ENCODE measurements at regions of chr1 and their contacts with region 1.

Region 1: DNA sequence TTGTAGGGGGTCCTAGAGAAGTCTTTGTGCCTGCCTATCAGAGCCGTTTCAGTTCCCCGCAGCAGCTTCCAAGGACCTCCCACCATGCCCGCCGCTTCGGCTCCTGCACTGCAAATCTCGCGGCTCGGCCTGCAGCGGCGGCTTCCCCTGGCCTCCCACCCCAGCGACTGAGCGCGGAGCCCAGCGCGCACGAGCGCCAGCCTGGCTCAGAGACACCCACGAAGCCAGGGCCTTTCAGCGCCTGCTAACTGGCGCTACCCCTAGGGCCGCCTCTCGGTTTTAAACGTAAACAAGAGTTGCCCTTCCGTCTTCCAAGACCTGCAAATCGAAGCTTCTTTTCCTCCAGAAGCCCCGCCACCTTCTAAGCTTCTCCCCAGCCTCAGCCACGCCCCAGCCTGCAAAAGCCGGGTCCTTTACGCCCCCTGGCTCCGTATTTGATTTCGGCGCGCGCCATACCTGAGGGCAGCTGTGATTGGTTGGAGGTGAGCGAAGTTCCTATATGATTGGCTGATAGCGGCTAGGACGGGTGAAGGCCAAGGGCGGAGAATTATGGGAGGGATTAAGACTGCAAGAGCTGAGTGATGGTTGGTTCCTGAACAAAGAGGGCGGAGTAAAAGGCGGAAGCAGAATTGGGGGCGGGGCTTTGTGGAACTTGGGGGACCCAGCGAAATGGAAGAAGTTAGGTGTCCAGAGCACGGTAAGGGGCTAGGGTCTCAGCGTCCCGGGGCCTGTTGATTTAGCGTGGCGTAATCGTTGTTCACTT is at the start of gene TTF2:
- DNase-seq: peak; percentile 90 to 94 (median 92)
- ATAC-seq: peak; percentile 99 to 100 (median 100)
- H3K4me3 ChIP-seq: peak within 1 kb of the TSS; percentile 67 to 88 (median 73)
- H3K27ac ChIP-seq: peak within 1 kb of the TSS in 11 of 12 donors; percentile 1 to 70 (median 54)
- H3K4me1 ChIP-seq: peaks cover 0 to 27% (median 7%) of the 10 kb centered on the region in 12 donors
- H3K27me3 ChIP-seq: no peaks in the 10 kb centered on the region
- CTCF ChIP-seq: peak in 9 of 12 donors; percentile 4 to 55 (median 33)
- POLR2A ChIP-seq: peak in 1 of 2 donors; percentile 13
- total RNA-seq, gene TTF2: 2.8 to 20.7 (median 9.5) TPM

Region 2: DNA sequence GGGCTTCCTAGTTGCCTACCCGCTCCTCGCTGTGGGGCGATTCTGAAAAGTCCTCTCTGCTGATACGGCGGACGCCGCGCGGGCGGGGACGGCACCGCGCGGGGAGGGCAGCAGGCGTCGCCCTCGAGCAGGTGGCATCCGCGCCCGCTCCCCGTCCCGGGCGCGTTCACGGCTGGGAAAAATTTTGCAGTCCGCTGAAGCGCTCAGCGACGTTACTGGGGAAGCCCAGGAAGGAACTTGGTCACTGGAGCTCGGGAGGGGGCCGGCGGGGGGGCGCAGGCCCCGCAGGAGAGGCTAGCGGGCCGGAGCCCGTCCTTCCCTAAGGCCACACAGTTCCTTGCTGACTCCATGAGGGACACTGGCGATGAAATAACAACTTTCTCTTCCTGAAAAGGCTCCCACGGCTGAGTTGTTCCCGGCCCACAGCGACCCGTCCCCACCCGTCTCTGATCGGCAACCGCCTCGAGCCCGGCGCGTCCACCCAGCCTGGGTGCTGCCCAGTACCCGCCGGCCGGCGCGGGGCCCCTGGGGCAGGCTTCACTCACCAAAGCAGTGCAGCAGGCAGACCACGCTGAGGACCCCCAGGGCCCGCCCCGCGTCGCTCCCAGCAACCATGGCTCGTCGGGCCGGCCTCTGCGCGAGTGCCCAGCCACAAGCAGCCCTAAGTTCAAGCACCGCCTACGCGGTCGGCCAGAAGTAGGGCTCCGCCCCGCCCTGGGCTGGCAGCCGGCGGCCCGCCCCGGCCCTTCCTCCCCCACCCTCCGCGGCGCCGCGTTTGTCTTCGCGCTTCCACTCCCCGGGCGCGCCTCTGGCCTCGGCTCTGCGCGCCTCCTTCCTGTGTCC is 489.3 kb before region 1 on chr1 and contains the start of gene CD58:
- intact Hi-C with region 1: loop called in 7 of 10 experiments (anchors 5 to 10 kb)
- DNase-seq: peak; percentile 93 to 96 (median 95)
- ATAC-seq: peak; percentile 83 to 95 (median 92)
- H3K4me3 ChIP-seq: peak within 1 kb of the TSS; percentile 79 to 99 (median 92)
- H3K27ac ChIP-seq: peak within 1 kb of the TSS; percentile 98 to 100 (median 99)
- H3K4me1 ChIP-seq: peaks cover 3 to 86% (median 49%) of the 10 kb centered on the region in 12 donors
- H3K27me3 ChIP-seq: no peaks in the 10 kb centered on the region
- CTCF ChIP-seq: peak; percentile 58 to 85 (median 72)
- POLR2A ChIP-seq: peak in 1 of 2 donors; percentile 83
- total RNA-seq, gene CD58: 19.6 to 37.5 (median 27.1) TPM

Region 3: DNA sequence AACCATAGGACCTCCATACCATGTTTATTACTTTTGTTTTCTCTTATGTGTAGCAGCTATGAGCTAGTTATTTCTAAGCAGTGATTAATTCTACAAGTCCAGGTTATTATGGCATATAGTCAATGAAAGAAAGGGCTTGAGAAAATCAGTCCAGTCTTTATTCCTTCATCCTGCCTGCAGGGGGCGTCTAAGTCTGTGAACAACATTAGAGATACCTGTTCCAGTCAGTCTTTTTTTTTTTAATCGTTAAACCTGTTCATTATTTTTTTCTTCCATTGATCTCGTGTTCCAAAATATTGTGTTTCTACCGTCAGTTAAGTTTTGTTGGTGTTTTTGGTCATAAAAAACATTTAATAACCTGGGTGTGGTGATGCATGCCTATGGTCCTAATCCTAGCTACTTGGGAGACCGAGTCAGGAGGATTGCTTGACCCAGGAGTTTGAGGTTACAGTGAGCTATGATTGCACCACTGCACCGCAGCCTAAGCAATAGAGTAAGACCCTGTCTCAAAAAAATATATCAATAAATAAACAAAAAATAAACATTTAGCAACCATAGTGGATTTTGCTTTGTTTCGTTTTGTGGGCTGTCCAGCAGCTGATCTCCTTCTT is 335.0 kb before region 1 on chr1:
- intact Hi-C with region 1: loop called in 2 of 10 experiments (anchors 2 to 5 kb)
- DNase-seq: peak in 4 of 5 donors; percentile 44 to 51 (median 47)
- ATAC-seq: peak in 1 of 4 donors; percentile 67
- H3K4me3 ChIP-seq: no peak overlapping the region
- H3K27ac ChIP-seq: no peak overlapping the region
- H3K4me1 ChIP-seq: peaks cover 0 to 6% (median 0%) of the 10 kb centered on the region in 12 donors
- H3K27me3 ChIP-seq: no peaks in the 10 kb centered on the region
- CTCF ChIP-seq: peak; percentile 54 to 87 (median 76)
- POLR2A ChIP-seq: no peak

Region 4: GRCh38 chr1:116853670-116854402 is 206.0 kb before region 1 on chr1:
- intact Hi-C with region 1: loop called in 8 of 10 experiments (anchors 2 to 10 kb)
- DNase-seq: no peak
- ATAC-seq: peak in 1 of 4 donors; percentile 76
- H3K4me3 ChIP-seq: no peak overlapping the region
- H3K27ac ChIP-seq: peak overlapping the region in 1 of 12 donors; percentile 4
- H3K4me1 ChIP-seq: peaks cover 0 to 29% (median 7%) of the 10 kb centered on the region in 12 donors
- H3K27me3 ChIP-seq: no peaks in the 10 kb centered on the region
- CTCF ChIP-seq: no peak
- POLR2A ChIP-seq: no peak

Region 5: DNA sequence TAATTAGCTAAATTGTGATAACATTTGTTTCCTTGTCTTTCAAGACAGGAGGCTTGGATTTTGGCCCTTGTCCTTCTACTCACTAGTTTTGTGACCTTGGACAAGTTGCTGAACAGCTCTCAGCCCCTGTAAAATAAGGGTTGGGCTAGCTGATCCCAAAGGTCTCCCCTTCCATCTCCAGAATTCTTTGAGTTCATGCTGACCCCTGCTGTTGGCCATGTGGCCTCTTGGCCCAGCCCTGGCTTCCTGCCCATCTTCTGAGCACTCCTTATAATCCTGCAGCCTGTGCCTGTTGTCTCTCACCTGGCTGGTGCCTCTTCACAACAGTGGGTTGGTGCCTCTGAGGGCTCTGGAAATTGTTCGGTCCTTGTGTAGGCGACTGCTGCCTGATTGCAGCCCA is 140.1 kb before region 1 on chr1:
- intact Hi-C with region 1: loop called in 2 of 10 experiments (anchors 10 kb)
- DNase-seq: peak in 2 of 5 donors; percentile 32 to 48
- ATAC-seq: peak in 1 of 4 donors; percentile 5
- H3K4me3 ChIP-seq: no peak overlapping the region
- H3K27ac ChIP-seq: peak overlapping the region in 6 of 12 donors; percentile 2 to 96 (median 33)
- H3K4me1 ChIP-seq: peaks cover 0 to 79% (median 45%) of the 10 kb centered on the region in 12 donors
- H3K27me3 ChIP-seq: no peaks in the 10 kb centered on the region
- CTCF ChIP-seq: peak in 3 of 12 donors; percentile 10 to 30 (median 19)
- POLR2A ChIP-seq: no peak

Region 6: DNA sequence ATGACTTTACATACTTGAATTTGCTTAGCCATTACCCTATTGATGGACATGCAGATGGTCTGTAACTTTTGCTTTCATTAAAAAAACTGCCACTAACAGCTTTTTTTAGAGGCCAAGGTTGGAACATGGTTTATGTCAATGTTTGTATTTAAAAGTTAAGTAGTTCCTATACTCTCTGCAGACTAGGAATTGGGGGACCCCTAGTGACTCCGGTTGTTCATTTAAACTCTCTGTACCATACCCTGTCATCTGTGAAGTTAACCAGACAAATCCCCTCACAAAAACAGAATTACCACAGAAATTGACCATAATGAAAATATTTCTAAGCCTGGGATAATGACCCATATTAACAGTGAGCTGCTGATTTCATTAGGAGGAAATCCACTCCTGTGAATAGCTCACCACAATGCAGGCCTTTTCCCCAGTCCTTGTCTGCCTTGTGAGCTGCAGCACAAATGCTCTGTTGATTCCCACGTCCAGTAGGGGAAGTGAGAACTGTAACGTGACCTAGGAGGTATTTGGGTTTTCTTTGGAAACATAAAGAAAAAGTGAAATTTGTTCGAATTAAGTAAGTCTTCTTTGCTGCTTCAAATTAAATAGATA is 88.5 kb before region 1 on chr1:
- intact Hi-C with region 1: no loop called
- DNase-seq: no peak
- ATAC-seq: peak in 3 of 4 donors; percentile 51 to 68 (median 67)
- H3K4me3 ChIP-seq: no peak overlapping the region
- H3K27ac ChIP-seq: peak overlapping the region in 7 of 12 donors; percentile 8 to 65 (median 41)
- H3K4me1 ChIP-seq: peaks cover 0 to 25% (median 15%) of the 10 kb centered on the region in 12 donors
- H3K27me3 ChIP-seq: no peaks in the 10 kb centered on the region
- CTCF ChIP-seq: no peak
- POLR2A ChIP-seq: no peak

Region 7: DNA sequence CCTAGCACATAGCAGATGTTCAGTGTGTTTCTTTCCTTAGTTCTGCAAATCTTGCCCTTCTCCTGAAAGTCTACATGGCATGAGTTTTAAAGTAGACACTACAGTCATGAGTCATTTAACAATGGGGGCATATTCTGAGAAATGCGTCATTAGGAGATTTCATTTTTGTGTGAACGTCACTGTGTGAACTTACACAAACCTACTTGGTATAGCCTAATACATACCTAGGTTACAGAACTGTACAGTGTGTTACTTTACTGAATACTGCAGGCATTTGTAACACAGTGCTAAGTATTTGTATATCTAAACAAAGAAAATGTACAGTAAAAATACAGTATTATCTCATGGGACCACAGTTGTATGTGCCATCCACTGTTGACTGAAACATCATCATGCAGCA is 10.3 kb after region 1 on chr1:
- intact Hi-C with region 1: no loop called
- DNase-seq: no peak
- ATAC-seq: no peak
- H3K4me3 ChIP-seq: no peak overlapping the region
- H3K27ac ChIP-seq: no peak overlapping the region
- H3K4me1 ChIP-seq: no peaks in the 10 kb centered on the region
- H3K27me3 ChIP-seq: no peaks in the 10 kb centered on the region
- CTCF ChIP-seq: no peak
- POLR2A ChIP-seq: no peak

Region 8: GRCh38 chr1:117113199-117113598 is 53.3 kb after region 1 on chr1:
- intact Hi-C with region 1: no loop called
- DNase-seq: no peak
- ATAC-seq: no peak
- H3K4me3 ChIP-seq: no peak overlapping the region
- H3K27ac ChIP-seq: no peak overlapping the region
- H3K4me1 ChIP-seq: peaks cover 0 to 12% (median 0%) of the 10 kb centered on the region in 12 donors
- H3K27me3 ChIP-seq: no peaks in the 10 kb centered on the region
- CTCF ChIP-seq: no peak
- POLR2A ChIP-seq: no peak